ENCODE measurements at regions of chr11 and their contacts with region 1.

Region 1: GRCh38 chr11:94897330-94897768 is 76.0 kb downstream of the CWC15 start:
- DNase-seq: peak in 3 of 5 donors; percentile 35 to 51 (median 51)
- ATAC-seq: peak in 3 of 4 donors; percentile 32 to 64 (median 58)
- H3K4me3 ChIP-seq: no peak overlapping the region
- H3K27ac ChIP-seq: no peak overlapping the region
- H3K4me1 ChIP-seq: peaks cover 0 to 5% (median 0%) of the 10 kb centered on the region in 12 donors
- H3K27me3 ChIP-seq: no peaks in the 10 kb centered on the region
- CTCF ChIP-seq: peak; percentile 82 to 95 (median 90)
- POLR2A ChIP-seq: no peak

Region 2: DNA sequence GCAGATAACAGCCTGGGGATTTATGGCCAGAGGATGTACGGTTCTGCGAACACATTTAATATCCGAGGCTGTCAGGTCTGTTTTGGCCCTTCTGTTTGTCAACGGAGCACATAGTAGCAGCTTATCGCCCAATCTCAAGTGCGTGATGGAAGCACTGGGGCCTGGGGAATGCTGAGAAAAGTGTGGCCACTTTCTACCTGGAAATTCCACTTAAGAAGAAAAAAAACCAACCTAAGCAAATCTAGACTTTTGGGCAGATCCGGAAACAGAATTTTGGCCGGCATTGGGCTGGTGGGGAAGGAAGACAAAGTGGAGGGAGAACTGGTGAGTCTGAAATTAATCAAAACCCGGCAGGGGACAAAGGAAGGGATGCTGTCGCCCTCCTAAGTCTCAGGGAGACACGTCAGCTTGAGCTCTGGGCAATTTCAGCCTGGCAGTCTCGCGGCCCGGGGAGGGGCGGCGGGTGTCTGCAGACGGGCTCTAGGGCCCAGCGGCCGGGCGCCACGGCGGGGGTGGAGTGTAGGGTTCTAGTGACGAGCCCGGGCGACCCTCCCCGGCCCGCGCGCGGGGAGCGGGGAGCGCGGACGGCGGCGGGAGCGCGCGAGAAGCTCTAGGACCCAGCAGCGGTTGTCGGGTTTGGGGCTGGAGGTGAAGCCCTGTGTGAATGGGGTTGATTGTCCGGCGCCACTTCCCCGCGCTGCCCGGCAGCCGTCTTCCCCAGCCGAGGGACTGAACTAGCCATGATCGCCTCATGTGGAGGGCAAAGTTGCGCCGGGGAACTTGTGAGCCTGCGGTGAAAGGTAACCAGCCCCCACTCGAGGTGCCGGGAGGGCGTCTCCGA is 129.4 kb before region 1 on chr11 and contains the start of gene AMOTL1:
- intact Hi-C with region 1: loop called in 2 of 10 experiments (anchors 5 to 10 kb)
- DNase-seq: peak; percentile 91 to 94 (median 93)
- ATAC-seq: peak; percentile 89 to 97 (median 94)
- H3K4me3 ChIP-seq: peak within 1 kb of the TSS; percentile 77 to 97 (median 85)
- H3K27ac ChIP-seq: peak within 1 kb of the TSS; percentile 76 to 99 (median 96)
- H3K4me1 ChIP-seq: peaks cover 2 to 37% (median 19%) of the 10 kb centered on the region in 12 donors
- H3K27me3 ChIP-seq: no peaks in the 10 kb centered on the region
- CTCF ChIP-seq: peak in 4 of 12 donors; percentile 7 to 37 (median 24)
- POLR2A ChIP-seq: peak; percentile 17 to 78
- total RNA-seq, gene AMOTL1: 24.4 to 76.0 (median 51.7) TPM

Region 3: DNA sequence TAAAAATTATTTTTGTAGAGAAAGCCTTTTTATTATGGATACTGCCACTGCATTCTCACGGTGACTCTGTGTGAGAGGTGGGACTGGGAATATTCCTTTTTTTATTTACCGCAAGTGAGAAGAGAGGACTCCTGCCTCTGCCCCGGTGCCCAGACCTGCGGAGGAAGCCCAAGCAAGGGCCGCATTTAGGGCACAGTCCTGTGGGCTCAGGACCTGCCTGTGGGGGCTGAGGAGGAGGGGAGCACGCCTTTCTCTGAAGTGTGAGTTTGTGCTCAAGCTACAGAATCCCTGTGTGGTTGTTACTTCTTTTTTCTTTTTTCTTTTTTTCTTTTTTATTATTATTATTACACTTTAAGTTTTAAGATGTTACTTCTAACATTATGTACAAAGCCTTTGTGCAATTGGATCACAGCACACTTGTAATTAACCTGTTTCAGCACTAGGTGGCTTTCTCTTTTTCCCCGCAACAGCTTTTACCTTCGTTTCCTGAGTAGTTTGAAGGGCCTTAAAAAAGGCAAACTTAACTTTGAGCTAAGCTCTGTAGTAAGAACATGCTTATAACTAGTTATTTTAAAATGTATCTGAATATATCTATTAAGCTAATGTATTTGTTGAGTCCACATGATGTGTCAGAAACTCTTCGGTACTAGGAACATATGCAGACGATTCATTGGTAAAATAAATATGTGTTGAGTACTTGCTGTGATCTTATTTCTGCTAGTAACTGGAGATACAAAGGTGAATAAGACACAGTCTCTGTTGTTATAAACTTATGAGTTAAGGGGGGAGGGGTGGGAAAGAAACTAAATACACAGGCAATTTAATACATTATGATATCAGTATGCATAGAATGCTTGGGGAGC is 110.9 kb before region 1 on chr11:
- intact Hi-C with region 1: loop called in 2 of 10 experiments (anchors 5 to 10 kb)
- DNase-seq: no peak
- ATAC-seq: no peak
- H3K4me3 ChIP-seq: no peak overlapping the region
- H3K27ac ChIP-seq: no peak overlapping the region
- H3K4me1 ChIP-seq: peaks cover 2 to 93% (median 55%) of the 10 kb centered on the region in 12 donors
- H3K27me3 ChIP-seq: no peaks in the 10 kb centered on the region
- CTCF ChIP-seq: peak; percentile 45 to 72 (median 59)
- POLR2A ChIP-seq: no peak

Region 4: GRCh38 chr11:94973099-94973968 is 76.0 kb after region 1 on chr11 and contains the starts of genes CWC15 and KDM4D:
- intact Hi-C with region 1: loop called in 1 of 10 experiments (anchors 10 kb)
- DNase-seq: peak; percentile 96
- ATAC-seq: peak; percentile 99 to 100 (median 100)
- H3K4me3 ChIP-seq: peak within 1 kb of the TSS; percentile 71 to 93 (median 87)
- H3K27ac ChIP-seq: peak within 1 kb of the TSS in 11 of 12 donors; percentile 57 to 89 (median 80)
- H3K4me1 ChIP-seq: peaks cover 4 to 19% (median 12%) of the 10 kb centered on the region in 12 donors
- H3K27me3 ChIP-seq: no peaks in the 10 kb centered on the region
- CTCF ChIP-seq: peak in 1 of 12 donors; percentile 15
- POLR2A ChIP-seq: no peak
- total RNA-seq, gene CWC15: 54.4 to 81.8 (median 62.6) TPM
- total RNA-seq, gene KDM4D: 0.65 to 1.3 (median 0.95) TPM in 8 of 9 donors, not detected in the other

Measured in heart left ventricle (tissue), 16 donors.